ENCODE measurements at regions of chr9 and their contacts with region 1.

Region 1: GRCh38 chr9:136991993-136992818 is at the start of gene PAXX:
- DNase-seq: peak; percentile 90 to 99 (median 93)
- ATAC-seq: peak; percentile 96
- H3K4me3 ChIP-seq: peak within 1 kb of the TSS; percentile 74
- H3K4me3 Mint-ChIP-seq: peak within 1 kb of the TSS; percentile 76 to 90 (median 86)
- H3K27ac ChIP-seq: peak within 1 kb of the TSS; percentile 81
- H3K27ac Mint-ChIP-seq: peak within 1 kb of the TSS; percentile 48 to 89 (median 88)
- H3K4me1 ChIP-seq: peaks cover 17 to 23% of the 10 kb centered on the region in 2 donors
- H3K4me1 Mint-ChIP-seq: peaks cover 0 to 25% (median 15%) of the 10 kb centered on the region in 7 donors
- H3K27me3 ChIP-seq: no peaks in the 10 kb centered on the region
- H3K27me3 Mint-ChIP-seq: peaks cover 5 to 22% (median 5%) of the 10 kb centered on the region in 5 donors
- total RNA-seq, gene PAXX: 54.8 to 78.2 (median 68.0) TPM

Region 2: DNA sequence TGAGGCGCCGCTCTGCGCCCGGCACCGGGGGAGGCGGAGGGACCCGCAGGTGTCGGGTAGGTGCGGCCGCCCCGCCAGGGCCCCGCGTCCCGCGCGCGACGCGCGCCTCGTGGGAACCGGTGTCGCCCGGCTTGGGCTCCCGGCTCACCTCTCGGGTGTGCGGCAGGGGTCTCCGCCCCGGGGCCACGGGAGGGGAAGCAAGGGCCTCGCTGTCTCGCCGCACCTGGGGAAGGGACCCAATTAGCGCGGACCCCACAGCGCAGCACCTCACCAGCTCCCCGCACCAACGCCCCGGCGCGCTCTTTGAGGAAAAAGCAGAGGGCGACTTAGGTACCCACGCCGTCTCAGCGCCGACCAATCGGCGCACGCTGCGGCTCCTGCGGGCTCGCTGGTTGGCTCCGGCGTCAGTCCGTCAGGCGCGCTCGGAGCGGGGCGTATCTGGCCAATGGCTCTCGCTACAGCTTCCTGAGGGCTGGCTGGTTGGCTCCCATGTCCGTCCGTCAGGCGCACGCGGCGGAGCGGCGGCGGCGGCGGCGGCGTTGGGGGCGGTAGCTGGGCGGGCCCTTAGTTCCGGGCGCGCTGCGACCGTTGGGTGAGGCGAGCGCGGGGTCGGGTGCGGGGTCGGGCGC is 106.1 kb before region 1 on chr9 and contains the start of gene TRAF2:
- CTCF ChIA-PET with region 1: no interaction called
- POLR2A ChIA-PET with region 1: interaction called, 3 read pairs
- intact Hi-C with region 1: loop called in 1 of 2 experiments (anchors 1 kb)
- DNase-seq: peak; percentile 93 to 98 (median 96)
- ATAC-seq: peak; percentile 95
- H3K4me3 ChIP-seq: peak within 1 kb of the TSS; percentile 76
- H3K4me3 Mint-ChIP-seq: peak within 1 kb of the TSS; percentile 83 to 99 (median 86)
- H3K27ac ChIP-seq: peak within 1 kb of the TSS; percentile 97
- H3K27ac Mint-ChIP-seq: peak within 1 kb of the TSS; percentile 78 to 95 (median 89)
- H3K4me1 ChIP-seq: peaks cover 26 to 29% of the 10 kb centered on the region in 2 donors
- H3K4me1 Mint-ChIP-seq: peaks cover 17 to 53% (median 37%) of the 10 kb centered on the region in 7 donors
- H3K27me3 ChIP-seq: no peaks in the 10 kb centered on the region
- H3K27me3 Mint-ChIP-seq: no peaks in the 10 kb centered on the region
- total RNA-seq, gene TRAF2: 14.6 to 72.8 (median 29.6) TPM

Region 3: GRCh38 chr9:136949817-136950655 is 42.2 kb before region 1 on chr9:
- CTCF ChIA-PET with region 1: no interaction called
- POLR2A ChIA-PET with region 1: interaction called, 5 read pairs
- intact Hi-C with region 1: loop called (anchors 1 to 5 kb)
- DNase-seq: peak; percentile 89 to 97 (median 95)
- ATAC-seq: peak; percentile 97
- H3K4me3 ChIP-seq: peak overlapping the region; percentile 68
- H3K4me3 Mint-ChIP-seq: peak overlapping the region; percentile 74 to 93 (median 86)
- H3K27ac ChIP-seq: peak overlapping the region; percentile 81
- H3K27ac Mint-ChIP-seq: peak overlapping the region; percentile 66 to 91 (median 86)
- H3K4me1 ChIP-seq: peaks cover 4 to 13% of the 10 kb centered on the region in 2 donors
- H3K4me1 Mint-ChIP-seq: peaks cover 0 to 13% (median 0%) of the 10 kb centered on the region in 7 donors
- H3K27me3 ChIP-seq: no peaks in the 10 kb centered on the region
- H3K27me3 Mint-ChIP-seq: no peaks in the 10 kb centered on the region

Region 4: GRCh38 chr9:137021979-137022619 is 29.9 kb after region 1 on chr9:
- CTCF ChIA-PET with region 1: no interaction called
- POLR2A ChIA-PET with region 1: interaction called, 3 read pairs
- intact Hi-C with region 1: loop called (anchors 1 kb)
- DNase-seq: peak in 5 of 9 donors; percentile 35 to 76 (median 39)
- ATAC-seq: peak; percentile 95
- H3K4me3 ChIP-seq: no peak overlapping the region
- H3K4me3 Mint-ChIP-seq: no peak overlapping the region
- H3K27ac ChIP-seq: no peak overlapping the region
- H3K27ac Mint-ChIP-seq: peak overlapping the region in 3 of 9 donors; percentile 33 to 49 (median 41)
- H3K4me1 ChIP-seq: peaks cover 2 to 9% of the 10 kb centered on the region in 2 donors
- H3K4me1 Mint-ChIP-seq: peaks cover under 1 to 5% (median 2%) of the 10 kb centered on the region in 7 donors
- H3K27me3 ChIP-seq: no peaks in the 10 kb centered on the region
- H3K27me3 Mint-ChIP-seq: peaks cover 0 to under 1% (median 0%) of the 10 kb centered on the region in 5 donors

Region 5: DNA sequence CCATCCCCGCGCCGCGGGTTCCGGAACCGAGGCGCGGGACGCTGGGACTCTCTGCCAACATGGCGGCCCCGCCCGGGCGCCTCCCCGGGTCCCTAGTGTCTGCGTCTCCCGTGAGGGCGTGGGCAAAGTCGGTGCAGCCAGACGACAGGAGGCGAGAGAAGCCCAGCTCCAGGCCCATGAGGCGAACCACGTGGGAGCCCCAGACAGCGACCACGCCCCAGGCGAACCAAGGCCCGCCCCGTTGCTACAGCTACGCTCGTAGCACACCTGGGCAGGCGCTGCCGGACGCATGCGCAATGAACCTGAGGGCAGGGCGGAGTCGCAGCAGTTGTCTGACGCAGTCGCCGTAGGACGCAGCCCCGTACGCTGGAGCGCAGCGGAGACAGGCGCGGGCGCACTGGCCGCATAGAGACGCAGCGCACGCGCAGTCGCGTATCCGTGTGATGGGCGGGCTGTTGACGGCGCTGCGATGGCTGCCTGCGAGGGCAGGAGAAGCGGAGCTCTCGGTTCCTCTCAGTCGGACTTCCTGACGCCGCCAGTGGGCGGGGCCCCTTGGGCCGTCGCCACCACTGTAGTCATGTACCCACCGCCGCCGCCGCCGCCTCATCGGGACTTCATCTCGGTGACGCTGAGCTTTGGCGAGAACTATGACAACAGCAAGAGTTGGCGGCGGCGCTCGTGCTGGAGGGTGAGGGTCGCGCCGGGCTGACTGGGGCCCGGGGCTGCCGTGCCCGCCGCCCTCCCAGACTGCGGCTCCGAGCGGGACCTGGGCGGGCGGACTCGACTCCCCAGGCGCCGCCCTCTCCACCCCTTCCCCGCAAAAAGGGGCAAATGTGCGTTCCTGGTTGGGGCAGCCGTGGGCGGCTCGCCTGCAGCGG is 94.6 kb after region 1 on chr9 and contains the start of gene MAN1B1:
- CTCF ChIA-PET with region 1: no interaction called
- POLR2A ChIA-PET with region 1: interaction called, 6 read pairs
- intact Hi-C with region 1: loop called in 1 of 2 experiments (anchors 1 kb)
- DNase-seq: peak; percentile 96 to 100 (median 99)
- ATAC-seq: peak; percentile 92
- H3K4me3 ChIP-seq: peak within 1 kb of the TSS; percentile 73
- H3K4me3 Mint-ChIP-seq: peak within 1 kb of the TSS; percentile 88 to 96 (median 92)
- H3K27ac ChIP-seq: peak within 1 kb of the TSS; percentile 92
- H3K27ac Mint-ChIP-seq: peak within 1 kb of the TSS; percentile 92 to 98 (median 95)
- H3K4me1 ChIP-seq: peaks cover 18% of the 10 kb centered on the region in 2 donors
- H3K4me1 Mint-ChIP-seq: peaks cover 25 to 34% (median 30%) of the 10 kb centered on the region in 7 donors
- H3K27me3 ChIP-seq: no peaks in the 10 kb centered on the region
- H3K27me3 Mint-ChIP-seq: no peaks in the 10 kb centered on the region
- total RNA-seq, gene MAN1B1: 57.3 to 74.2 (median 70.2) TPM

Region 6: DNA sequence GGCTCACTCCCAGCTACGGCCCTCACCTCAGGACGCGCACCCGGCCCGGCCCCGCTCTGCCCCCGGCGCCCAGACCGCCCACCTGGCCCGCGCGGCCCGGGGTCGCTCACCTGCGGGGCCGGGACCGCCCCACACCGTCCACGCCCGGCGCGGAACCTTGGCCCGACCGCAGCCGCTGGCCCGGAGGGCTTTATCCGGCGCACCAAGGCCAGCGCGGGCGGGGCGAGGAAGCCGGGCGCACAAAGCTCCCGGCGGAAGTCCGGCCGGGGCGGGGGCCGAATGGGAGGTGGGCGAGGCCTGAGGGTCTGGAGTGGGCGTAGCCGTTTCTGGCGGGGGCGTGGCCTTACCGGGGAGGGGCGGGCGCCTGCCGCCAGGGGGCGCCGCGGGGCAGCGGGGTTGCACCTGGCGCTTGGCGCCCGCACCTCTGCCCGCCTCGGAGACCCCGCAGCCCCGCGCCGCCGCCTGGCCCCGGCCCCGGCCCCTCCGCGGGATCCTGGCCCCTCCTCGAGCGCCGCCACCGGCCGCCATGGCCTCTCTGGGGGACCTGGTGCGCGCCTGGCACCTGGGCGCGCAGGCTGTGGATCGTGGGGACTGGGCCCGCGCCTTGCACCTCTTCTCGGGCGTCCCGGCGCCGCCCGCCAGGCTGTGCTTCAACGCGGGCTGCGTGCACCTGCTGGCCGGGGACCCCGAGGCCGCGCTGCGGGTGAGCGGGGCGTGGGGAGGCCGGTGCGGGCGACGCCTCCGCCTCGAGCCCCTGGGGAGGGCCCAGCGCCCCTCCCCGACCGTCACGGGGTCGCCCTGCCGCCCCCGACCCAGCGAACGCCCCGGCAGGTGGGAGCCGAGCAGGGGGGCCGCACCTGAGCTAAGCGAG is 431.0 kb after region 1 on chr9 and contains the starts of genes EXD3 and NOXA1:
- CTCF ChIA-PET with region 1: no interaction called
- POLR2A ChIA-PET with region 1: no interaction called
- intact Hi-C with region 1: loop called in 1 of 2 experiments (anchors 5 kb)
- DNase-seq: peak; percentile 84 to 99 (median 91)
- ATAC-seq: peak; percentile 97
- H3K4me3 ChIP-seq: peak within 1 kb of the TSS; percentile 65
- H3K4me3 Mint-ChIP-seq: peak within 1 kb of the TSS; percentile 76 to 90 (median 82)
- H3K27ac ChIP-seq: peak within 1 kb of the TSS; percentile 62
- H3K27ac Mint-ChIP-seq: peak within 1 kb of the TSS; percentile 28 to 91 (median 66)
- H3K4me1 ChIP-seq: peaks cover 0 to 5% of the 10 kb centered on the region in 2 donors
- H3K4me1 Mint-ChIP-seq: peaks cover 2 to 21% (median 13%) of the 10 kb centered on the region in 7 donors
- H3K27me3 ChIP-seq: no peaks in the 10 kb centered on the region
- H3K27me3 Mint-ChIP-seq: peaks cover 0 to 9% (median 0%) of the 10 kb centered on the region in 5 donors
- total RNA-seq, gene EXD3: 11.7 to 27.2 (median 24.7) TPM
- total RNA-seq, gene NOXA1: 0.94 to 11.1 (median 6.0) TPM